ENCODE measurements at regions of chrX and their contacts with region 1.

Region 1: DNA sequence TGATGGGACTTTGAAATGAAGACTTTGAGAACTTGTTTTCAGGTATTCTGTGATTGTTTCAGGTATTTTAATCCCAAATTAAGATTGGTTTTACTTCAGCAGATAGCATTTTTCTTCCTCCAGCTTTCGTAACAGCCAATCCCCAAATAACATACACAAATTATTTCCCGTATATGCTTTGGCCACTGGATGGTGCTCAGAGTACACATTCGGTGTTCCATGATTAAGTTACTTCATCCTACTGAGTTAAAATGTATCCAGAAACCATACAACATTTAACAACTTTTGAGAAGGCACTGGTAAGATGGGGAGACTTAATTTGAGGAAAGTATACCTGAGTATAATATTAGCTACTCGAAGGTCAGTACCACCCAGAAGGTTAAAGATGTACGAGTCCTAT is 233.4 kb upstream of the FAM47A start:
- DNase-seq: peak; percentile 29
- H3K4me3 Mint-ChIP-seq: no peak overlapping the region
- H3K27ac Mint-ChIP-seq: no peak overlapping the region
- H3K4me1 Mint-ChIP-seq: peaks cover 8% of the 10 kb centered on the region
- H3K27me3 Mint-ChIP-seq: no peaks in the 10 kb centered on the region
- CTCF ChIP-seq: peak; percentile 20

Region 2: GRCh38 chrX:34270434-34270833 is 95.0 kb before region 1 on chrX:
- CTCF ChIA-PET with region 1: no interaction called
- intact Hi-C with region 1: no loop called
- DNase-seq: no peak
- H3K4me3 Mint-ChIP-seq: no peak overlapping the region
- H3K27ac Mint-ChIP-seq: no peak overlapping the region
- H3K4me1 Mint-ChIP-seq: no peaks in the 10 kb centered on the region
- H3K27me3 Mint-ChIP-seq: no peaks in the 10 kb centered on the region
- CTCF ChIP-seq: no peak

Region 3: DNA sequence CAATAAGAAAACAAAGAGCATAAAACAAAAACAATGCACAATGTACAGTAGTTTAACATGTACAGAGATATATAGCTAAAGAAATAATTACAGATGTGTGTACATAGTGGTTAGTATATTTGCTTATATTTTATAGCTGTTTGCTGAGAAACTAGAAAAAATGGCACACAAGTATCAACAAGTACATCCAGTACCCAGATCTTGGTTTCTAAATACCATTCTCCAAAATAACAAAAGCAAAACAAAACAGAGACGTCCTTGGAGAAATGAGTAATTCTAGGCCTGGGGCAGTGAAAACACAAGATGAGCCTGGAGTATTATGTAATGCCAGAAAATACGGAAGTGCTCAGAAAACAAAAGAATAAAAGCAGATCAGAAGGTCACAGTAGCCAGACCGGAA is 102.0 kb after region 1 on chrX:
- CTCF ChIA-PET with region 1: no interaction called
- intact Hi-C with region 1: no loop called
- DNase-seq: no peak
- H3K4me3 Mint-ChIP-seq: no peak overlapping the region
- H3K27ac Mint-ChIP-seq: no peak overlapping the region
- H3K4me1 Mint-ChIP-seq: no peaks in the 10 kb centered on the region
- H3K27me3 Mint-ChIP-seq: no peaks in the 10 kb centered on the region
- CTCF ChIP-seq: no peak

Region 4: DNA sequence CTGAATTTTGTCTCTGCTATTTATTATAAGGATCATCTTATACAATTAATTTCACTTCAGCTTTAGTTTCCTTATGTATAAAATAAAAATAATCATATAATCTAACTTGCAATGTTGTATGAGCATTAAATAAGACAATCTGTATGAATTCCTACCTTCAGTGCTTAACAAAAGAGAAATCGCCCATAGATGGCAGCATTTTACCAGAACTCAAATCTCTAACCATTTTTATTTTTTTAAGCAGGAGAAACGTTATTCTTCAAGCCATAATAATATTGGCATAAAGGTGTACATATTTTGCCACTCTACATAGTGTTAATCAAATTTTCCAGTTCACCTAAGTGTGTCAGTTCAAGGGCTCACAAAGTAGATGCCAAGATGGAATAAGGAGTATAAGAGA is 212.8 kb after region 1 on chrX:
- CTCF ChIA-PET with region 1: no interaction called
- intact Hi-C with region 1: loop called (anchors 5 kb)
- DNase-seq: peak; percentile 15
- H3K4me3 Mint-ChIP-seq: no peak overlapping the region
- H3K27ac Mint-ChIP-seq: no peak overlapping the region
- H3K4me1 Mint-ChIP-seq: peaks cover 28% of the 10 kb centered on the region
- H3K27me3 Mint-ChIP-seq: no peaks in the 10 kb centered on the region
- CTCF ChIP-seq: no peak

Region 5: DNA sequence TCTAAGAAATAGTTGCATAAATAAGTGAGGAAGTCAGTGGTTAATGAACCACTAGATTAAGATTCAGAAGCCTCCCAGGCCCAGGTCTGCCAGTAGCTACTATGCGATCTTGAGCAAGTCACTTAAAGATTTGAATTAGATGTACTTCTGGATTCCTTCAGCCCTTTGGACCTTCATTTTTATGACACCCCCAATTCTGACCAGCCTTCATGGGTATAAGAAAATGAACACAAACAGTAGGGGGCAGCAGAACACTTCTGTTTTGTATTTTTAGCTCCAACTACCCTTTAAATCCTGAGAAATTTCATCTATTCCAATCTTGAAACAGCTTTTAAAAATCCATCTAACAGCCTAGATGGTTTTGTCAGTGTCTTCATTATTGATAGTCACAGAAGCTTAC is 272.6 kb after region 1 on chrX:
- CTCF ChIA-PET with region 1: no interaction called
- intact Hi-C with region 1: loop called (anchors 10 kb)
- DNase-seq: no peak
- H3K4me3 Mint-ChIP-seq: no peak overlapping the region
- H3K27ac Mint-ChIP-seq: no peak overlapping the region
- H3K4me1 Mint-ChIP-seq: peaks cover 27% of the 10 kb centered on the region
- H3K27me3 Mint-ChIP-seq: no peaks in the 10 kb centered on the region
- CTCF ChIP-seq: peak; percentile 38